MCF 10A (cell line): ENCODE measurements at regions of chr10 and their contacts with region 1.

Region 1: GRCh38 chr10:43436400-43437140 is at the start of gene ZNF487:
- DNase-seq: peak; percentile 84
- H3K4me3 Mint-ChIP-seq: peak within 1 kb of the TSS; percentile 96
- H3K27ac Mint-ChIP-seq: peak within 1 kb of the TSS; percentile 99
- H3K4me1 Mint-ChIP-seq: peaks cover 6% of the 10 kb centered on the region
- H3K27me3 Mint-ChIP-seq: no peaks in the 10 kb centered on the region
- CTCF ChIP-seq: no peak
- total RNA-seq, gene ZNF487: 2.2 and 2.6 TPM in 2 replicates

Region 2: GRCh38 chr10:43420369-43421200 is 16.0 kb before region 1 on chr10:
- CTCF ChIA-PET with region 1: interaction called, 5 read pairs
- POLR2A ChIA-PET with region 1: interaction called, 16 read pairs
- intact Hi-C with region 1: no loop called
- DNase-seq: peak; percentile 83
- H3K4me3 Mint-ChIP-seq: peak overlapping the region; percentile 85
- H3K27ac Mint-ChIP-seq: peak overlapping the region; percentile 93
- H3K4me1 Mint-ChIP-seq: peaks cover 13% of the 10 kb centered on the region
- H3K27me3 Mint-ChIP-seq: no peaks in the 10 kb centered on the region
- CTCF ChIP-seq: no peak

Region 3: DNA sequence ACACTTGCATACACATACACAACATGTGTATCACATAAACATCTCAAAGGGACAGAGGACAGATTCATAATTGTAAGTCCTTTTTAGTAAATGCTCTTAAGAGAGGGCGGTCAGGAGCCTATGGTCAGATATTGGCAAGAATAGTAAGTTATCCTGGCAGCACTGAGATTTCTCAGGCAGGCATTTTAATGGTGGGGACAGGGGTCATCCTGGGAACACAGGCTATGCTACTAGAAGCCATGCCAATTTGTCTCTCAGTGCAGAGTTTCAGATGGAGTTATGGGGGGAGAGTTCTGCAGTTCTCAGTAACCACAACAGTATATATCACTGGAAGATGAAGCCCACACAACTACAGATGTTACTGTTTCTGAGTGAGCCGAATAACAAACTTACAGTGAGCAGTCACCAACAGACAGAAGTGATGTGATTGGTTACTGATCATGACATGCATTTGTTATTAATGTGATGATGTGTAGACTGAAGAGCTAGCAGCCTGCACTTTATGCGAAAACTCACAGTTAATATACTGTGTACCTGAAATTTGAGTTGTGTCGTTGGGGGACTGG is 16.8 kb after region 1 on chr10:
- CTCF ChIA-PET with region 1: interaction called, 5 read pairs
- POLR2A ChIA-PET with region 1: interaction called, 26 read pairs
- intact Hi-C with region 1: no loop called
- DNase-seq: no peak
- H3K4me3 Mint-ChIP-seq: peak overlapping the region; percentile 42
- H3K27ac Mint-ChIP-seq: peak overlapping the region; percentile 47
- H3K4me1 Mint-ChIP-seq: peaks cover 19% of the 10 kb centered on the region
- H3K27me3 Mint-ChIP-seq: no peaks in the 10 kb centered on the region
- CTCF ChIP-seq: no peak

Region 4: GRCh38 chr10:43892062-43892770 is 455.6 kb after region 1 on chr10:
- CTCF ChIA-PET with region 1: no interaction called
- POLR2A ChIA-PET with region 1: no interaction called
- intact Hi-C with region 1: no loop called
- DNase-seq: peak; percentile 8
- H3K4me3 Mint-ChIP-seq: no peak overlapping the region
- H3K27ac Mint-ChIP-seq: no peak overlapping the region
- H3K4me1 Mint-ChIP-seq: peaks cover 6% of the 10 kb centered on the region
- H3K27me3 Mint-ChIP-seq: peaks cover 16% of the 10 kb centered on the region
- CTCF ChIP-seq: no peak